Mammary epithelial cell (primary cell): ENCODE measurements at regions of chr9 and their contacts with region 1.

Region 1: GRCh38 chr9:96317335-96317980 is 15.5 kb upstream of the HSD17B3 start:
- DNase-seq: peak; percentile 24
- H3K4me3 ChIP-seq: no peak overlapping the region
- H3K27ac ChIP-seq: no peak overlapping the region
- H3K4me1 ChIP-seq: no peaks in the 10 kb centered on the region
- H3K27me3 ChIP-seq: peaks cover under 1% of the 10 kb centered on the region
- CTCF ChIP-seq: peak; percentile 86 to 96

Region 2: DNA sequence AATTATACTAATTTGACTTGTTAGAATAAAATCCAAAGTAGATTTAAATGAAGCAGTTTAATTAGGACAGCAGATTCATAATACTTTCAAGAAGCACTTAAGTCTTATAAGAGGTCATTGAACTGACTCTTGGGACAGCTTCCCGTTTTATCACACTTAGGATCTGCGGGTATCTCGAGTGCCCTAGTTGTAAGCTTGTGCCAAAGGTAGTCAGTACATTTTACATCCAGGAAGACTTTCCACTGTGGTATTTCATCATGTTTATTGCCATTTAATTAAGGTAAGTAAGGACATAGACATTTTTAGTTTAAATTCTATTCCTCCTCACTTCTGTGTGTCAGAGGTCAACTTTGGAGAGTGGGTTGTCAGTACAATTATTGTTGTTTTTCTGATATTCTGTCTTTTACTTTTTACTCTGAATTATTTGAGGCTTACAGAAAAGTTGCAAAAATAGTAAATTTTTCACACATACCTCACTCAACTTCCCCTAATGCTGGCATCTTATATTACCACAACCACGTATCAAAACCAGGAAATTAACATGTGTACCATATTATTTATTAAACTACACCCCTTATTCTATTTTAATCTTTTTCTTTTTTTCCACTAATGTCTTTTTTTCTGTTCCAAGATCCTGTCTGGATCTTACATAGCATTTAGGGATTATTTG is 108.2 kb after region 1 on chr9:
- CTCF ChIA-PET with region 1: no interaction called
- dilution Hi-C with region 1: no loop called
- in situ Hi-C with region 1: no loop called
- intact Hi-C with region 1: no loop called
- DNase-seq: no peak
- H3K4me3 ChIP-seq: no peak overlapping the region
- H3K27ac ChIP-seq: no peak overlapping the region
- H3K4me1 ChIP-seq: peaks cover 24% of the 10 kb centered on the region
- H3K27me3 ChIP-seq: no peaks in the 10 kb centered on the region
- CTCF ChIP-seq: no peak

Region 3: DNA sequence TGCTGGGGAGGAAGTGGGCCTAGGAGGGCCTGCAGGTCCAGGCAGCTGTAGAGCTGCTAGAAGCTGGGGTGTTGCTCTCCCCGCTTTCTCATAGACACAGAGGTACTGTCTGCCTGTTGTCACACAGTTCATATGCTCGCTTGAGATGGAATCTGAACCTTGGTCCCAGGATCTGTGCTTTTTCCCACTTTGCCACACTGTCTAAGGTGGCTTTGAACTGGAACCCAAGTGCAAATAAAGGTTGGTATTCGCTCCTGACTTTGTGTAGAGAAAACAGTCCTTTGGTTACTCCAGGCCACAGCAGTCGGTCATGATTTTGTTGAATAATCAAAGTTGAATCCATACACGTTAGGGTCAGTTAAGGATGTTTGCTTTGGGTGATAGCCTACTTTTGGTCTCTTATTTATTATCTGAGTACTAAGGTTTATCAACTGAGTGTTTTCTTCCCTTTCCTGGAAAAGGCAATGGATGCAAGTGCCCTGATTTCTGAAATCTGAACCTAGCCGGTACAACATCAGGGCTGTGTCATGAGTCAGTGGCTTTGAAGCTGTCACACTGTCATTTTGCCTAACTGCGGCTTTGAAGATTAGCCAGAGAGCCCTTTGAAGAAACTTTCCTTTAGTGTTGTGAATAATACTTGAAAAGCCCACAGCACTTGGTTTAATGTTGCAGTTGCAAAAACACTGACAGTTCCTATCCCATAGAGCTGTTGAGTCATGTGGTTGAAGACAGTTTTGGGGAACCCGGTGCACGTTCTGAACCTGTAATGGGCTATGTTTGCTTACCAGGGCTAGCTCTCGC is 173.8 kb after region 1 on chr9:
- CTCF ChIA-PET with region 1: no interaction called
- dilution Hi-C with region 1: no loop called
- in situ Hi-C with region 1: no loop called
- intact Hi-C with region 1: no loop called
- DNase-seq: no peak
- H3K4me3 ChIP-seq: no peak overlapping the region
- H3K27ac ChIP-seq: no peak overlapping the region
- H3K4me1 ChIP-seq: peaks cover 9% of the 10 kb centered on the region
- H3K27me3 ChIP-seq: no peaks in the 10 kb centered on the region
- CTCF ChIP-seq: no peak

Region 4: GRCh38 chr9:96654443-96655197 is 337.2 kb after region 1 on chr9:
- CTCF ChIA-PET with region 1: no interaction called
- dilution Hi-C with region 1: no loop called
- in situ Hi-C with region 1: loop called in 1 of 2 experiments (anchors 5 kb)
- intact Hi-C with region 1: no loop called
- DNase-seq: peak; percentile 79
- H3K4me3 ChIP-seq: peak overlapping the region; percentile 48 to 74 (median 66)
- H3K27ac ChIP-seq: peak overlapping the region; percentile 89
- H3K4me1 ChIP-seq: peaks cover 8% of the 10 kb centered on the region
- H3K27me3 ChIP-seq: no peaks in the 10 kb centered on the region
- CTCF ChIP-seq: peak in 1 of 2 donors; percentile 21